ENCODE measurements at regions of chr9 and their contacts with region 1.

Region 1: DNA sequence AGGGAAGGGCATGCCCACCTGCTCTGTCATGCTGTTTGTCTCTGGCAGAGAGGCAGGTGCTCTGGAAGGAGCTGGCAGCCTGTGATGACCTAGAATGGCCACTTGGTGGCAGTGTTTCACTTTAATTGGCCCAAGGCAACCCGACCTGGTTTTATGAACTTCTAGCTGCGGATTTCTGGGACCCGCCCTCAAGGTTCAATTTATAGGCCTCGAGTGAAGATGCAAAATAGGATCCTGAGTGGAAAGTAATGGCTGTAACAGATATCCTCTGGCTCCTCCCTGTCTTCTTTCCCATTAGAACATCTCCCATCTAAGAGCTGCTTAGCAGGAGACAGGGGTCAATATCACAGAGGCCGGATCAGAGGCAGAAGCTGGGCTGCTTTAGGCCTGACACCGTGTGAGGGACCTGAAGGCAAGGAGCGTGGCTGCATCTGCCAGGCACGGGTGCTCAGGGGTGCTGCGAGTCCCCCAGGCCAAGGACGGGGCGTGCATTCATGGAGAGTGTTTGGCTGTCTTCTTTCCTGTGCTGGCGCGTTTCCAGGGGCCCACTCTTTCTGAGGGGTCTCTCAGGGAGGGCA is 56.7 kb upstream of the SLC28A3 start:
- DNase-seq: peak; percentile 31 to 69 (median 39)
- H3K4me3 ChIP-seq: no peak overlapping the region
- H3K4me3 Mint-ChIP-seq: no peak overlapping the region
- H3K27ac ChIP-seq: no peak overlapping the region
- H3K27ac Mint-ChIP-seq: peak overlapping the region in 1 of 8 donors; percentile 47
- H3K4me1 ChIP-seq: no peaks in the 10 kb centered on the region
- H3K4me1 Mint-ChIP-seq: peaks cover 0 to 2% (median 0%) of the 10 kb centered on the region in 3 donors
- H3K27me3 ChIP-seq: no peaks in the 10 kb centered on the region
- H3K27me3 Mint-ChIP-seq: peaks cover 0 to 3% of the 10 kb centered on the region in 2 donors

Region 2: GRCh38 chr9:84383178-84383577 is 14.1 kb before region 1 on chr9:
- CTCF ChIA-PET with region 1: interaction called, 18 read pairs
- POLR2A ChIA-PET with region 1: no interaction called
- DNase-seq: no peak
- H3K4me3 ChIP-seq: no peak overlapping the region
- H3K4me3 Mint-ChIP-seq: no peak overlapping the region
- H3K27ac ChIP-seq: no peak overlapping the region
- H3K27ac Mint-ChIP-seq: no peak overlapping the region
- H3K4me1 ChIP-seq: no peaks in the 10 kb centered on the region
- H3K4me1 Mint-ChIP-seq: no peaks in the 10 kb centered on the region
- H3K27me3 ChIP-seq: no peaks in the 10 kb centered on the region
- H3K27me3 Mint-ChIP-seq: peaks cover 4 to 21% of the 10 kb centered on the region in 2 donors

Region 3: DNA sequence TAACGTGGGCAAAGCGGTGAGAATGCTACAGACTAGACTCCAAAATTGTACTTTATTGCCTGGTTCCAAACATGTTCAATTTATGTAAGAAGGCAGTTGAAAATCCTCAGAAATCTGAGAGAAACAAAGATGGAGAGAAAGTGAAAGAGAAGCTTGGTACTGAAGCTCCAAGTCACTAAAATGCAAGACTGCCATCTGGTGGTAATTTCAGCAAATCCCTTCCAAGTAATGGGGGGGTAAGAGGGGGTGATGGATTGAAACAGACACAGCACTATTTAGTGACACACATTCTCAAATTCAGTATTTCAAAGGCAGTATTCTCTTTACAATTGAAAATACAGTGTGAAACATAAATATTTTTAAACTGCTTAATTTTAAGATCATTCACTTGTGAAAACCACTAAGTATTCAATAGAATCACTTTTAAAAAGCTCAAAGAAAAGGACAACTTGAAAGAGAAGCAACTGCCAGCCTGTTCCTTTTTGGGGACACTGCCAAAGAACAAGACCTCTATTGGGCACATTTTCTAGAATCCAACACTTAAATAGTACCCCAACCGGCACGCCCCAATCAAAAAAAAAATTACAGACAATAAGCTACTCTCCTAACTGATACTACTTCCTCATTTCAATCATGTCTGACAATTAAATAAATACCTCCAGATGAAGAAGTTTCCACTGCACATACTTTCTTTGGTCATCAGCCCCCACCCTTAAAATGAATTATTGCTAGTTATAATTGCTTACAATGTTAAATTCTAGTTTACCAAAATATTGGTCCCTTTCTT is 1213.0 kb after region 1 on chr9:
- CTCF ChIA-PET with region 1: interaction called, 22 read pairs
- POLR2A ChIA-PET with region 1: no interaction called
- DNase-seq: peak in 3 of 5 donors; percentile 50 to 55 (median 52)
- H3K4me3 ChIP-seq: no peak overlapping the region
- H3K4me3 Mint-ChIP-seq: peak overlapping the region in 4 of 7 donors; percentile 4 to 70 (median 48)
- H3K27ac ChIP-seq: no peak overlapping the region
- H3K27ac Mint-ChIP-seq: peak overlapping the region; percentile 10 to 91 (median 75)
- H3K4me1 ChIP-seq: no peaks in the 10 kb centered on the region
- H3K4me1 Mint-ChIP-seq: peaks cover 8 to 29% (median 15%) of the 10 kb centered on the region in 3 donors
- H3K27me3 ChIP-seq: no peaks in the 10 kb centered on the region
- H3K27me3 Mint-ChIP-seq: no peaks in the 10 kb centered on the region